ENCODE measurements at regions of chr5 and their contacts with region 1.

Region 1: GRCh38 chr5:79514391-79515105 is 614 bp upstream of the HOMER1 start:
- DNase-seq: peak; percentile 80 to 94 (median 91)
- ATAC-seq: peak; percentile 91
- H3K4me3 ChIP-seq: peak overlapping the region; percentile 71
- H3K4me3 Mint-ChIP-seq: peak overlapping the region; percentile 88 to 99 (median 98)
- H3K27ac ChIP-seq: peak overlapping the region; percentile 97
- H3K27ac Mint-ChIP-seq: peak overlapping the region; percentile 93 to 99 (median 98)
- H3K4me1 ChIP-seq: peaks cover 4 to 26% of the 10 kb centered on the region in 2 donors
- H3K4me1 Mint-ChIP-seq: peaks cover 6 to 53% (median 40%) of the 10 kb centered on the region in 7 donors
- H3K27me3 ChIP-seq: peaks cover 0 to 7% of the 10 kb centered on the region in 2 donors
- H3K27me3 Mint-ChIP-seq: peaks cover 0 to 27% (median 23%) of the 10 kb centered on the region in 5 donors

Region 2: DNA sequence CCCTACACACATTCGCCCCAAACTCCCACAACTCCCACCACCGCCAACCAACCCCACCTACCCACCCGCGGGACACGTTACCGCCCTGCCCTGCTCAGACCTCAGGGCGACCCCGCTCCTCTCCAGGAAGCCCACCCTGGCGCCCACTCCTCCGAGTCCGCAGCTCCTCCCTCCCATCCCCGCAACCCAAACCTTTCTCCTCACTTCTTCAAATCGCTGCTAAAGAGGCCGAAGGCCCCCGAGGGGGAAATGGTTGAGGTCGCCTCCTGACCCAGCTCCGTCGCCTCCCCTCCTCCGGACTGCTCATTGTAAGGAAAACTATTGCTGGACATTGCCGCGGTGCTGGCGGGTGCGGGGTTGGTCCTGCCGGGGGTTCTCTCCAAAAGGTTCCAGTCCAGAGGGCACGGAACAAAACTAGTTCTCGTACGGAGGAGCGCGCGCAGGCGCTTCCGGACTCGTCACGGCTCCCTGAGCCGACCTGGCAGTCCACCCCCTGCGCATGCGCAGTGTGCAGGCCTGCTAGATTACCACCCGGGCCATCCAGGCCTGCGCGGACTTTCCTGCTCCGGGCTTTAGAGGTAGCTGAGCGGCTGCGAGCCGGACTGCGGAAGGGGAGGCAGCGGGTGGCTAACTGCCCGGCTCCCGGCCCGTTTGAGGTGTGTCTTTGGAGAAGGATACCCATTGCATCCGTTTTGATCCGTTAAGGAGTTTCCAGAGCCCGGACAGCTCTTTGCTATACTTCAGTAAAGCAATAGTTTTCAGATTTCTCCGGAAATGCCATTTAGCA is 1220.1 kb before region 1 on chr5 and contains the start of gene AP3B1:
- CTCF ChIA-PET with region 1: no interaction called
- POLR2A ChIA-PET with region 1: no interaction called
- intact Hi-C with region 1: loop called in 1 of 2 experiments (anchors 1 kb)
- DNase-seq: peak; percentile 94 to 98 (median 96)
- ATAC-seq: peak; percentile 97
- H3K4me3 ChIP-seq: peak within 1 kb of the TSS; percentile 98
- H3K4me3 Mint-ChIP-seq: peak within 1 kb of the TSS; percentile 86 to 100 (median 98)
- H3K27ac ChIP-seq: peak within 1 kb of the TSS; percentile 88
- H3K27ac Mint-ChIP-seq: peak within 1 kb of the TSS; percentile 77 to 99 (median 97)
- H3K4me1 ChIP-seq: peaks cover 5 to 9% of the 10 kb centered on the region in 2 donors
- H3K4me1 Mint-ChIP-seq: peaks cover 27 to 50% (median 46%) of the 10 kb centered on the region in 7 donors
- H3K27me3 ChIP-seq: no peaks in the 10 kb centered on the region
- H3K27me3 Mint-ChIP-seq: peaks cover 0 to 11% (median 0%) of the 10 kb centered on the region in 5 donors
- total RNA-seq, gene AP3B1: 30.2 to 45.0 (median 37.2) TPM

Region 3: DNA sequence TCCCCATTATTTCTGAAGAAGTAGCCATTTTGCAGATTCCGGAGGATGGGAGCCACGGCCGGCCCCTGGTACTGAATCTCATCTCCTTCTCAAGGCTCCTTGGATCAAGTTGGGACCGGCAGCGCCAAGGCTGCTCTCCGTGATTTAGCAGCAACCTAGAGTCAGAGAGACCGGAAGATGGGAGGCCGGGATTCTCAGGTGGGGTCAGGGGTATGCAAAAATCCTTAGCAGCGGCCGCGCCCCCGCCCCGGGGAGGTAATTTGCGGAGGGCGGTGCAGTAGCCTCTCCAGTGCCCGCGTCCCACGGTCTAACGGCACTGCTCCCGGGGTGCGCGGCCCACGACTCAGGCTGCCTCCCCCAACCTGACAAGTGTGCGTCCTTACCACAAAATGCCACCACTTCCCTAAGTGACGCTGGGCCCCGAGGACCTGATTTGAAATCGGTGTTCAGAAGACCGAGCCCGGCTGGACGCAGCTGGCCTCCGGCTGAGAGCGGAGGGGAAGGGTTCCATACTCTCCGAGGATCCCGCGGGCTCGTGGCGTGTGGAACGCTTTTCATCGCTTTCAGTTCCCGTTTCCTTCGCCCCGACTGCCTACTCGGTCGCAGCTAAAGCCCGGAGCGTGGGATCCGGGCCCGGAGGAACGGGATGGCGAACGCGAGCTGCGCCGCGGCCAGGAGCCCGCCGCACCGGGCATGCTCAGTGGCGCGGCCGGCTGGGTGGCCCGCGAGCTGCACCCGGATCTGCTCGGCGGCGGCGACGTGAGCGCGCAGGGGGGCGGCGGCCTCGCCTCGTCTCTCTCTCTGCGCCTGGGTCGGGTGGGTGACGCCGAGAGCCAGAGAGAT is 1154.5 kb before region 1 on chr5 and contains the start of gene SCAMP1:
- CTCF ChIA-PET with region 1: no interaction called
- POLR2A ChIA-PET with region 1: interaction called, 3 read pairs
- intact Hi-C with region 1: loop called in 1 of 2 experiments (anchors 2 kb)
- DNase-seq: peak; percentile 84 to 96 (median 93)
- ATAC-seq: peak; percentile 92
- H3K4me3 ChIP-seq: peak within 1 kb of the TSS; percentile 99
- H3K4me3 Mint-ChIP-seq: peak within 1 kb of the TSS; percentile 89 to 97 (median 94)
- H3K27ac ChIP-seq: peak within 1 kb of the TSS; percentile 85
- H3K27ac Mint-ChIP-seq: peak within 1 kb of the TSS; percentile 71 to 97 (median 96)
- H3K4me1 ChIP-seq: peaks cover 11 to 16% of the 10 kb centered on the region in 2 donors
- H3K4me1 Mint-ChIP-seq: peaks cover 27 to 64% (median 55%) of the 10 kb centered on the region in 7 donors
- H3K27me3 ChIP-seq: no peaks in the 10 kb centered on the region
- H3K27me3 Mint-ChIP-seq: no peaks in the 10 kb centered on the region
- total RNA-seq, gene SCAMP1: 16.9 to 27.6 (median 23.0) TPM

Region 4: DNA sequence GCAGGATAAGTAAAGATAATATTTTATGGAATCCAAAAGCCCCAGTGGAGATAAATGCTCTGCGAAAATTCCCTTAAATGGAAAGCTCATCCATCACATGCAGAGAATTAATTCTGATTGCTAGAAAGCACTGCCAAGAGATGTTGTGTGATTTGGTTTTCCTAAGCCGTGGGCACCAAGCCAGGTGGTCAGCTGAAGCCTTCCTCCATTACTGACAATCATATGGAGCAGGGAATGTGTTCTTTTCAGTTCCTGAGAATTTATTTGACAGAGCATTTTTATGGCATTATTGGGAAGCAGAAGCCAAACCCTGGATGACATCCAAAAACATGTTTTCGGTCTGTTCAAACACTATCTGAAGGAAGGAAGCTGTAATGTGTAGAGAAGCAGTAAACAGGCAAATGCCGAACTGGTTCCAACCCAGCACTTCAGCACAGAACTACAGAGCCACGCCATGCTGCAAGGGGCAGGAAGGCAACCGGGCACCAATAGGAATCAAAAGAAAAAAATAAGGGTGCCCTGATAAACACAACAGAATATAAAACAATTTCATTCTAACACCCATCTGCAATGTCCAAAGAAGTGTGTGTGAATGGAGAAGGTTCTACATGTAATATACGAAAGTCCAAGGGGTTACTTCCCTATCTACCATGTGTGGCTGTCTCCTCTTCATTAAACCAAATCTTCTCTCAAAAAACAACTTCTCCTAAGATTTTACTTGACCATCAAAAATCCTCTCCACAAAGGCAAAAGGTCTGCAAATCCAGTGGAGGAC is 541.7 kb before region 1 on chr5:
- CTCF ChIA-PET with region 1: no interaction called
- POLR2A ChIA-PET with region 1: no interaction called
- intact Hi-C with region 1: no loop called
- DNase-seq: no peak
- ATAC-seq: peak; percentile 40
- H3K4me3 ChIP-seq: no peak overlapping the region
- H3K4me3 Mint-ChIP-seq: no peak overlapping the region
- H3K27ac ChIP-seq: no peak overlapping the region
- H3K27ac Mint-ChIP-seq: no peak overlapping the region
- H3K4me1 ChIP-seq: no peaks in the 10 kb centered on the region
- H3K4me1 Mint-ChIP-seq: peaks cover 0 to 8% (median 0%) of the 10 kb centered on the region in 7 donors
- H3K27me3 ChIP-seq: no peaks in the 10 kb centered on the region
- H3K27me3 Mint-ChIP-seq: no peaks in the 10 kb centered on the region

Region 5: DNA sequence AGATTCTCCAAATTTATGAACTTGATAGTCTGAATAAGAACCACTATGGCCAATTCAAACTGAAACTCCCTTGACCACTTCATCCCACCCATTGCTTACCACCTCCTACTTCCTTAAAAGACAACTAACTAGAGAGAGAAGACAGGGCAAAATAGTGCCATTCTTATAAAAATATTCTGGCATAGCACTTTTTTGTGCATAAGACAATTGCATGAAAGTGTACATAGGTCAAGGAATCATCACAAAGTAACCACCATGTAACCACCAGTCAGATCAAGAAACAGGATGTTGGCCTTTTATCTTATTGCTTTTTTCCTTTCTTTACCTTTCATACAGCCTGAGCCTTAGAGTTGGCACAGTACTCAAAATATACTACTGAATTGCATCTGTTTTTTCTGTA is 521.4 kb before region 1 on chr5:
- CTCF ChIA-PET with region 1: no interaction called
- POLR2A ChIA-PET with region 1: no interaction called
- intact Hi-C with region 1: no loop called
- DNase-seq: peak in 4 of 9 donors; percentile 10 to 36 (median 25)
- ATAC-seq: peak; percentile 34
- H3K4me3 ChIP-seq: no peak overlapping the region
- H3K4me3 Mint-ChIP-seq: peak overlapping the region in 3 of 10 donors; percentile 4 to 37 (median 31)
- H3K27ac ChIP-seq: no peak overlapping the region
- H3K27ac Mint-ChIP-seq: peak overlapping the region in 1 of 9 donors; percentile 3
- H3K4me1 ChIP-seq: peaks cover 0 to 3% of the 10 kb centered on the region in 2 donors
- H3K4me1 Mint-ChIP-seq: peaks cover 6 to 26% (median 15%) of the 10 kb centered on the region in 7 donors
- H3K27me3 ChIP-seq: no peaks in the 10 kb centered on the region
- H3K27me3 Mint-ChIP-seq: peaks cover 0 to 17% (median 4%) of the 10 kb centered on the region in 5 donors

Region 6: GRCh38 chr5:79612667-79613198 is 98.2 kb after region 1 on chr5:
- CTCF ChIA-PET with region 1: no interaction called
- POLR2A ChIA-PET with region 1: interaction called, 10 read pairs
- intact Hi-C with region 1: loop called (anchors 1 kb)
- DNase-seq: no peak
- ATAC-seq: no peak
- H3K4me3 ChIP-seq: peak overlapping the region; percentile 84
- H3K4me3 Mint-ChIP-seq: peak overlapping the region; percentile 95 to 100 (median 97)
- H3K27ac ChIP-seq: peak overlapping the region; percentile 90
- H3K27ac Mint-ChIP-seq: peak overlapping the region; percentile 91 to 99 (median 98)
- H3K4me1 ChIP-seq: peaks cover 14 to 18% of the 10 kb centered on the region in 2 donors
- H3K4me1 Mint-ChIP-seq: peaks cover 25 to 58% (median 44%) of the 10 kb centered on the region in 7 donors
- H3K27me3 ChIP-seq: no peaks in the 10 kb centered on the region
- H3K27me3 Mint-ChIP-seq: peaks cover 0 to 6% (median 2%) of the 10 kb centered on the region in 5 donors

Region 7: DNA sequence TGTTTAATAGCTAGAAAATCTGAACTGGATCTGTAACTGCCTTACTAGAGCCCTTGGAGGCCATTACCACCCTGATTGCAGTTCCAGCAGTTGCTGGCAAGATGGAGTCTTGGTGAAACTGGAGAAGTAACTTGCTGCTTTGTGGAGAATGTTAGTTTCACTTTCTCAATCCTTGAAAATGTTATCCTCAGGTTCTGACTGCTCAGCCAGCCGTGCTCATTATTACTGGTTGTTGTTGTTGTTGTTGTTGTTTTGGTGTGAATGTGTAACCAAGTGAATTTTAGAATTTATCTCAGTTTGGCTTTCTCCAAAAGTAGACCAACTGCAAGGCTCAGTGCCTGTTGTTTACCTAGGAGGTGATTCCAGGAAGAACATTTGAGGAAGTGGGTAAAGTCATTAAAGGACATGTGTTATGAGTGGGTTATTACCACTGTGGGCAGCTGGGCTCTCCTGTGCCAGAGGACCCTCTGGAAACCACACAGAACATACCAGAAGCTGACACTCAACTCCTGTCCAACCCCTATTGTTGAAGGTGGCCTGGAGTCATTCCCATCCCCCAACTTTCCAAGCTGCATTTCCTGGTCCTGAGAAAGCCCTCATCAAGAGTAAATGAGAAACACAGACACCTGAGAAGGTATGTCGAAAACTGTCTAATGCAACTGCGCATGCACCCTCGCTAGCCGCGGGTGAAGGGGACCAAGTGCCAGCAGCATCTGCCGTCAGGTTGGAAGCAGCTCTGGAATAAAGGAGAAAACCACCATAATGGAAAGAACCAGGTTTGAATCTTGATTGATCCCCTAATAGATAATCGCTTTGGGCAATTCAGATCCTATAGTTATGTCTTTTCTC is 286.7 kb after region 1 on chr5:
- CTCF ChIA-PET with region 1: no interaction called
- POLR2A ChIA-PET with region 1: no interaction called
- intact Hi-C with region 1: loop called in 1 of 2 experiments (anchors 1 kb)
- DNase-seq: no peak
- ATAC-seq: no peak
- H3K4me3 ChIP-seq: no peak overlapping the region
- H3K4me3 Mint-ChIP-seq: peak overlapping the region in 5 of 10 donors; percentile 6 to 67 (median 24)
- H3K27ac ChIP-seq: no peak overlapping the region
- H3K27ac Mint-ChIP-seq: peak overlapping the region in 2 of 9 donors; percentile 69 to 82
- H3K4me1 ChIP-seq: peaks cover 0 to 11% of the 10 kb centered on the region in 2 donors
- H3K4me1 Mint-ChIP-seq: peaks cover 13 to 28% (median 21%) of the 10 kb centered on the region in 7 donors
- H3K27me3 ChIP-seq: no peaks in the 10 kb centered on the region
- H3K27me3 Mint-ChIP-seq: no peaks in the 10 kb centered on the region

Region 8: GRCh38 chr5:79990598-79991507 is 476.3 kb after region 1 on chr5 and contains the start of gene MTX3:
- CTCF ChIA-PET with region 1: no interaction called
- POLR2A ChIA-PET with region 1: no interaction called
- intact Hi-C with region 1: loop called (anchors 1 kb)
- DNase-seq: peak; percentile 65 to 85 (median 82)
- ATAC-seq: peak; percentile 97
- H3K4me3 ChIP-seq: peak within 1 kb of the TSS; percentile 80
- H3K4me3 Mint-ChIP-seq: peak within 1 kb of the TSS; percentile 76 to 93 (median 88)
- H3K27ac ChIP-seq: peak within 1 kb of the TSS; percentile 75
- H3K27ac Mint-ChIP-seq: peak within 1 kb of the TSS; percentile 82 to 95 (median 92)
- H3K4me1 ChIP-seq: peaks cover 17 to 18% of the 10 kb centered on the region in 2 donors
- H3K4me1 Mint-ChIP-seq: peaks cover 17 to 47% (median 36%) of the 10 kb centered on the region in 7 donors
- H3K27me3 ChIP-seq: no peaks in the 10 kb centered on the region
- H3K27me3 Mint-ChIP-seq: peaks cover 0 to 13% (median 8%) of the 10 kb centered on the region in 5 donors
- total RNA-seq, gene MTX3: 12.9 to 31.0 (median 24.4) TPM

Region 9: GRCh38 chr5:80181618-80182211 is 667.2 kb after region 1 on chr5:
- CTCF ChIA-PET with region 1: no interaction called
- POLR2A ChIA-PET with region 1: no interaction called
- intact Hi-C with region 1: no loop called
- DNase-seq: peak in 7 of 9 donors; percentile 57 to 70 (median 68)
- ATAC-seq: peak; percentile 79
- H3K4me3 ChIP-seq: no peak overlapping the region
- H3K4me3 Mint-ChIP-seq: peak overlapping the region; percentile 54 to 100 (median 78)
- H3K27ac ChIP-seq: peak overlapping the region; percentile 79
- H3K27ac Mint-ChIP-seq: peak overlapping the region; percentile 74 to 99 (median 97)
- H3K4me1 ChIP-seq: peaks cover 57 to 95% of the 10 kb centered on the region in 2 donors
- H3K4me1 Mint-ChIP-seq: peaks cover 65 to 96% (median 89%) of the 10 kb centered on the region in 7 donors
- H3K27me3 ChIP-seq: no peaks in the 10 kb centered on the region
- H3K27me3 Mint-ChIP-seq: no peaks in the 10 kb centered on the region